ENCODE measurements at regions of chr17 and their contacts with region 1.

Region 1: GRCh38 chr17:45640141-45640850 is 143.8 kb upstream of the CRHR1 start:
- DNase-seq: peak; percentile 81 to 88
- ATAC-seq: peak; percentile 96
- H3K4me3 ChIP-seq: no peak overlapping the region
- H3K27ac ChIP-seq: no peak overlapping the region
- H3K4me1 ChIP-seq: no peaks in the 10 kb centered on the region
- CTCF ChIP-seq: peak; percentile 99
- EP300 ChIP-seq: no peak
- POLR2A ChIP-seq: no peak
- RAD21 ChIP-seq: peak; percentile 97 to 99

Region 2: DNA sequence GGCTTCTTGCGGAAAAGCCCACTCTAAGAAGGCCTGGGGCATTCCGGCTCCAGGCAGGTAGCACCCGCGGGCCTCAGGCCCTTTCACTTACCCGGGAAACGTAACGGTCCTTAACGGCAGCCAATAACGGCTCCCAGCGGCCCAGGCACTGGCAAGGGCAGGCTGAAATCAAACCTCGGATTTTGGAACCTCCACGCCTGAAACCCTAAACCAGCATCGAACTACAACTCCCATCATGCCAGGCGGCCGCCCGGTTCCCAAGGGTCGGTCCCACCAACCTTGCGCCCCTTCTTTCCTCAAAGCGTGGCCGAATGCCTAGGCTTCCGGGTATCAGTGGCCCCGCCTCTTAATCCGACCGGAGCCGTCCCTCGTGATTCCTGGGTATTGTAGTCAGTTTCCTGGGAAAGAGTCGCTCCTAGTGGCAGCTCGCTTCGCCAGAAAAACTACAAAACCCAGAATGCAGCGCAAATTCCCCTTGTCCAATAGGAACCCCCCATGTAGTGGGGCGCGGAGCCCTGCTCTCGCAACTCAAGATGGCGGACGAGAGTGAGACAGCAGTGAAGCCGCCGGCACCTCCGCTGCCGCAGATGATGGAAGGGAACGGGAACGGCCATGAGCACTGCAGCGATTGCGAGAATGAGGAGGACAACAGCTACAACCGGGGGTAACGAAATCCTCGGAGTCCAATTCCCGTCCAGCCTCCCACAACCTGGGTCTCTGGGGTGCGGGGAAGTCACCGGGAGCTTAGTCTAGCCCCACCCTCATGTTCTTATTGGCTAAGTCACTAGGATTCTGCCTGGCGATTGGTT is 579.3 kb before region 1 on chr17 and contains the start of gene NMT1:
- CTCF ChIA-PET with region 1: no interaction called
- POLR2A ChIA-PET with region 1: no interaction called
- DNase-seq: peak; percentile 99 to 100
- ATAC-seq: peak; percentile 97
- H3K4me3 ChIP-seq: peak within 1 kb of the TSS; percentile 67
- H3K27ac ChIP-seq: peak within 1 kb of the TSS; percentile 87 to 91
- H3K4me1 ChIP-seq: peaks cover 16% of the 10 kb centered on the region
- CTCF ChIP-seq: no peak
- EP300 ChIP-seq: no peak
- POLR2A ChIP-seq: peak; percentile 91
- RAD21 ChIP-seq: no peak
- polyA plus RNA-seq, gene NMT1: 82.9 and 95.8 TPM in 2 replicates

Region 3: GRCh38 chr17:45628019-45628418 is 12.3 kb before region 1 on chr17:
- CTCF ChIA-PET with region 1: interaction called, 53 read pairs
- POLR2A ChIA-PET with region 1: no interaction called
- DNase-seq: no peak
- ATAC-seq: no peak
- H3K4me3 ChIP-seq: no peak overlapping the region
- H3K27ac ChIP-seq: no peak overlapping the region
- H3K4me1 ChIP-seq: no peaks in the 10 kb centered on the region
- CTCF ChIP-seq: no peak
- EP300 ChIP-seq: no peak
- POLR2A ChIP-seq: no peak
- RAD21 ChIP-seq: no peak

Region 4: GRCh38 chr17:45677770-45678169 is 37.5 kb after region 1 on chr17:
- CTCF ChIA-PET with region 1: interaction called, 10 read pairs
- POLR2A ChIA-PET with region 1: no interaction called
- DNase-seq: peak in 1 of 2 experiments; percentile 29
- ATAC-seq: peak; percentile 48 to 54; a peak in 4 of 6 replicates
- H3K4me3 ChIP-seq: no peak overlapping the region
- H3K27ac ChIP-seq: no peak overlapping the region
- H3K4me1 ChIP-seq: no peaks in the 10 kb centered on the region
- CTCF ChIP-seq: no peak
- EP300 ChIP-seq: no peak
- POLR2A ChIP-seq: no peak
- RAD21 ChIP-seq: no peak

Region 5: DNA sequence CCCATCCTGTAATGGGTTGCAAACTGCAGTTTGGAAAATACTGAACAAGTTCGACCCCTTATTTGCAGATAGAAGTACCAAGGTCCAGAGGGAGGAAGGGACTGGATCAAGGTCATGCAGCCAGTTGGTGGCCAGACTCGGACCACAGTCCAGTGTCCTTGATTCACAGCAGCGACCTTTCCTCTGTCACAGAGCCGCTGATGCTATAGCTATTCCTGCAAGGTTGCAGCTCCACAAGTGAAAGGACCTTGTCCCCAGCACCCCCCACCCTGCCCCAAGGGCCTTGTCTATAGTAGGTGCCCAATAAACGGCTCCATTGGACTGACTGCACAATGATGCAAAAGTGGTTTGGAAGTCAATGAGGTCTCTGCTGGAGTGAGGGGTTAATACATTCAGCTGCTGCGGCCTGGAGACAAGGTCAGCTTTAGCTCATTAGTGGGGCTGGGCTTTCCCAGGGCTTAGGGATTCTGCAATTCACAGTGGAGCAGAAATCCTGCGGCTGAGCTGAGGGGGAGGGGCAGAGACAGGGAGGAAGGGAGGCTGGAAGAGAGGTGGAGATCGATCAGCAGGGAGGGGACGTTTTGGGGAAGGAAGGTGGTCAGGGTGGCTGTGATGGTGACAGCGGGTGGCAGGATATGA is 130.5 kb after region 1 on chr17:
- CTCF ChIA-PET with region 1: interaction called, 10 read pairs
- POLR2A ChIA-PET with region 1: no interaction called
- DNase-seq: no peak
- ATAC-seq: no peak
- H3K4me3 ChIP-seq: no peak overlapping the region
- H3K27ac ChIP-seq: no peak overlapping the region
- H3K4me1 ChIP-seq: peaks cover 7% of the 10 kb centered on the region
- CTCF ChIP-seq: no peak
- EP300 ChIP-seq: no peak
- POLR2A ChIP-seq: no peak
- RAD21 ChIP-seq: no peak

Region 6: GRCh38 chr17:45828628-45829027 is 188.3 kb after region 1 on chr17:
- CTCF ChIA-PET with region 1: interaction called, 317 read pairs
- POLR2A ChIA-PET with region 1: interaction called, 6 read pairs
- DNase-seq: no peak
- ATAC-seq: no peak
- H3K4me3 ChIP-seq: no peak overlapping the region
- H3K27ac ChIP-seq: no peak overlapping the region
- H3K4me1 ChIP-seq: no peaks in the 10 kb centered on the region
- CTCF ChIP-seq: no peak
- EP300 ChIP-seq: no peak
- POLR2A ChIP-seq: no peak
- RAD21 ChIP-seq: peak in 1 of 2 experiments; percentile 23; a peak in 1 of 5 replicates

Region 7: GRCh38 chr17:45857977-45858709 is 217.8 kb after region 1 on chr17:
- CTCF ChIA-PET with region 1: interaction called, 136 read pairs
- POLR2A ChIA-PET with region 1: no interaction called
- DNase-seq: no peak
- ATAC-seq: peak; percentile 46 to 59; a peak in 5 of 6 replicates
- H3K4me3 ChIP-seq: no peak overlapping the region
- H3K27ac ChIP-seq: no peak overlapping the region
- H3K4me1 ChIP-seq: no peaks in the 10 kb centered on the region
- CTCF ChIP-seq: no peak
- EP300 ChIP-seq: no peak
- POLR2A ChIP-seq: no peak
- RAD21 ChIP-seq: no peak